ENCODE measurements at regions of chr3 and their contacts with region 1.

Region 1: DNA sequence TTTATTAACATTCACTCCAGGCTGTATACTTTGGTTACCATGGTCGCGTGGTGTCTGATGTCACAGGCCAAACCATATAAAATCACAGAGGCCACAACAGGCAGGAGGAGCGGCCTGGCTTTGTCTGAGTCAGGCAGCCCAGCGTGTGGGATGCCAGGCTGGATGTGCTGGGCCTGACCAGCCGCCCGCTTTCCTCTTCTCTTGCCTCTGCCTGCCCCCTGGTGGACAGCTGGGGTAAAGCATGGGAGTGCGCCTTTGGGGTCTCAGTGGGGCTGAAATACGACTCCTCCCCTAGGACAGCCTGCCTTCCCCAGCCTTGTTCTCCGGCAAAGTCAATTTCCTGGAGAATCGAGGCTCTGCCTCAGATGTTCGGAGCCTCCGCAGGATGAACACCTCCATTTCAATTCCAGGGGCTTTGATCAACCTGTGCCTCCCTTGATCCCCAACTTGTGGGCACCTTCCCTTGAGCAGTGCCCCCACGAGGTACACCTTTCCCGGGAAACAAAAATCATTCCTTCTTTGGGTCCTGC is 78.2 kb downstream of the CCNL1 start:
- DNase-seq: peak; percentile 89 to 90
- H3K4me3 ChIP-seq: no peak overlapping the region
- H3K27ac ChIP-seq: peak overlapping the region in 2 of 3 donors; percentile 19 to 29
- H3K4me1 ChIP-seq: peaks cover 0 to 28% of the 10 kb centered on the region in 2 donors
- H3K27me3 ChIP-seq: no peaks in the 10 kb centered on the region
- CTCF ChIP-seq: peak; percentile 94 to 99 (median 96)
- POLR2A ChIP-seq: no peak

Region 2: GRCh38 chr3:156151824-156152428 is 929.8 kb before region 1 on chr3:
- intact Hi-C with region 1: loop called (anchors 5 kb)
- DNase-seq: peak; percentile 79
- H3K4me3 ChIP-seq: no peak overlapping the region
- H3K27ac ChIP-seq: no peak overlapping the region
- H3K4me1 ChIP-seq: no peaks in the 10 kb centered on the region
- H3K27me3 ChIP-seq: no peaks in the 10 kb centered on the region
- CTCF ChIP-seq: peak; percentile 52 to 87 (median 78)
- POLR2A ChIP-seq: no peak

Region 3: GRCh38 chr3:156554842-156555687 is 526.7 kb before region 1 on chr3 and contains the start of gene SSR3:
- intact Hi-C with region 1: loop called (anchors 10 kb)
- DNase-seq: peak; percentile 100
- H3K4me3 ChIP-seq: peak within 1 kb of the TSS; percentile 66 to 95 (median 83)
- H3K27ac ChIP-seq: peak within 1 kb of the TSS; percentile 76 to 86 (median 85)
- H3K4me1 ChIP-seq: peaks cover 35 to 49% of the 10 kb centered on the region in 2 donors
- H3K27me3 ChIP-seq: no peaks in the 10 kb centered on the region
- CTCF ChIP-seq: peak in 4 of 6 experiments; percentile 33 to 78 (median 62)
- POLR2A ChIP-seq: peak; percentile 90 to 94
- total RNA-seq, gene SSR3: 134 to 223 (median 176) TPM

Region 4: GRCh38 chr3:156674046-156674910 is 407.5 kb before region 1 on chr3 and contains the start of gene TIPARP:
- intact Hi-C with region 1: loop called (anchors 5 kb)
- DNase-seq: peak; percentile 100
- H3K4me3 ChIP-seq: peak within 1 kb of the TSS; percentile 55 to 95 (median 84)
- H3K27ac ChIP-seq: peak within 1 kb of the TSS; percentile 92 to 97 (median 97)
- H3K4me1 ChIP-seq: peaks cover 14 to 25% of the 10 kb centered on the region in 2 donors
- H3K27me3 ChIP-seq: no peaks in the 10 kb centered on the region
- CTCF ChIP-seq: peak in 5 of 6 experiments; percentile 65 to 93 (median 81)
- POLR2A ChIP-seq: peak; percentile 94 to 100
- total RNA-seq, gene TIPARP: 23.3 to 65.0 (median 31.2) TPM

Region 5: DNA sequence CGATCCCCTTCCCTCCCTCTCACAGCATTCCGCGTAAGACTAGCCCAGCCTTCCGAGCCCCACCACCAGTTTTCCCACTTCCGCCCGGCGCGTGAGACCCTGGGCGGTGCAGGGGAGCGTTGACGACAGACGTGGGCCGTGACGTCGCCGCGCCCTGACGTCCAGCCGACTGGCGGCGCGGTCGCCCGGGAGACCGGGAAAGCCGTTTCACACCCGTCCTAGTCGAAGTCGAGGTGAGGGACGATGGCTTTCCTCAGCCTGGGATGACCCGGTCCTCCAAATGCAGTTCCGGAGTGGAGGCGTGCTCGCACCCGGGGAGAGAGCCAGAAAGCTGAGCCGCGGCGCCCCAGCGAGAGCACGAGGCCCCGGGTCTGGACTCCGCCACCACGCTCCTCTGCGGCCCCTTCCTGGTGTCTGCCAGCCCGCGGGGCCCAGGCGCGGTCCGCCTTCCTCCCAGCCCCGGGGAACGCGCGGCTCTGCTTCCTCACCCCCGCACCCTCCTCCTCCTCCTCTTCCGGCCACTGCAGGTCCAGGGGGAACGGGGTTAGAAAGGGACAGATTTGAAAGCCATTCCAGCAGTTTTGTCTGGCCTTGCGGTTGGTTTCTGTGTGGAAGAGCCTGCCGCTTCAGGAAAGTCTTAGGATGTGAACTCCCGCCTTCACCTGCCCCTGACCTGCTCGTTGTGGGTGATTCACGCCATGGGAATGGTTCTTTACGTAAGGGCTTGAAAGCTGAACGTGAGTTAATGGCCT is 255.4 kb before region 1 on chr3 and contains the start of gene LEKR1:
- intact Hi-C with region 1: loop called (anchors 10 kb)
- DNase-seq: peak; percentile 84 to 86
- H3K4me3 ChIP-seq: peak within 1 kb of the TSS; percentile 5 to 73 (median 54)
- H3K27ac ChIP-seq: peak within 1 kb of the TSS; percentile 94 to 99 (median 96)
- H3K4me1 ChIP-seq: peaks cover 4 to 12% of the 10 kb centered on the region in 2 donors
- H3K27me3 ChIP-seq: no peaks in the 10 kb centered on the region
- CTCF ChIP-seq: no peak
- POLR2A ChIP-seq: peak; percentile 68 to 89
- total RNA-seq, gene LEKR1: 6.3 to 7.5 (median 6.8) TPM

Region 6: DNA sequence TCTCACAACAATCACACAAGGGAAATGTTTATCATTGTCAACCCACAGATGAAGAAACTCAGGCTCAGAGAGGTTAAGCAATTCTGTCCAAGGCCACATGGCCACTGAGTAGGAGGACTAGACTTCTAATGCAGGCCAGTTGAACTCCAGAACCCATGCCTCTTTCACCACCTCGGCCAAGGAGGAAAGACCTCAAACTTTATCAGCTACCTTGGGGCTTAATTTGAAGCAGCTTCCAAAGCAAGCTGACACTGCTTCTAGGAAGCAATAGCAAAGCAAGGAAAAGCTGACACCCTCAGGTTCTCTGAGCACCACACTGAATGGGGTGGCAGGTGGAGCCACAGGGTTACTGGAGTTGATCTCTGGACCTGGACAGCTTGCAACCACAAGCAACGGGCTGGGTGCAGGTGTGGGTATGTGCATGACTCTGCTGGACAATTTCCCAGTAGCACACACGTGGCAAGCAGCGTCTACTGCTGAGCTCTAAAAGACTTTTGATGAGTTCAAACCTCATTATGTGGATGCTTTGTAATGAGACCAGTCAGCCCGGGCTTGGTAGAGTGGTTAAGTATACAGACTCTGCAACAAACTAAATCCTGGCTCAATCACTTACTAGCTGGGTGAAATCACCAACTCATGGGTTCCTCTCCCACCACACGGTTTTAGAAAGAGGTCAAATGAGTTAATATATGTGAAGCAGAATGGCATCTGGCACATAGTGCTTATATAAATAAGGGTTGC is 55.1 kb after region 1 on chr3:
- intact Hi-C with region 1: loop called (anchors 5 kb)
- DNase-seq: peak; percentile 75 to 76
- H3K4me3 ChIP-seq: no peak overlapping the region
- H3K27ac ChIP-seq: peak overlapping the region; percentile 64 to 70 (median 66)
- H3K4me1 ChIP-seq: peaks cover 19 to 27% of the 10 kb centered on the region in 2 donors
- H3K27me3 ChIP-seq: no peaks in the 10 kb centered on the region
- CTCF ChIP-seq: no peak
- POLR2A ChIP-seq: no peak

Measured in thyroid gland (tissue), 4 donors.